Sciatic nerve (tissue), 2 donors: ENCODE measurements at regions of chr4 and their contacts with region 1.

Region 1: DNA sequence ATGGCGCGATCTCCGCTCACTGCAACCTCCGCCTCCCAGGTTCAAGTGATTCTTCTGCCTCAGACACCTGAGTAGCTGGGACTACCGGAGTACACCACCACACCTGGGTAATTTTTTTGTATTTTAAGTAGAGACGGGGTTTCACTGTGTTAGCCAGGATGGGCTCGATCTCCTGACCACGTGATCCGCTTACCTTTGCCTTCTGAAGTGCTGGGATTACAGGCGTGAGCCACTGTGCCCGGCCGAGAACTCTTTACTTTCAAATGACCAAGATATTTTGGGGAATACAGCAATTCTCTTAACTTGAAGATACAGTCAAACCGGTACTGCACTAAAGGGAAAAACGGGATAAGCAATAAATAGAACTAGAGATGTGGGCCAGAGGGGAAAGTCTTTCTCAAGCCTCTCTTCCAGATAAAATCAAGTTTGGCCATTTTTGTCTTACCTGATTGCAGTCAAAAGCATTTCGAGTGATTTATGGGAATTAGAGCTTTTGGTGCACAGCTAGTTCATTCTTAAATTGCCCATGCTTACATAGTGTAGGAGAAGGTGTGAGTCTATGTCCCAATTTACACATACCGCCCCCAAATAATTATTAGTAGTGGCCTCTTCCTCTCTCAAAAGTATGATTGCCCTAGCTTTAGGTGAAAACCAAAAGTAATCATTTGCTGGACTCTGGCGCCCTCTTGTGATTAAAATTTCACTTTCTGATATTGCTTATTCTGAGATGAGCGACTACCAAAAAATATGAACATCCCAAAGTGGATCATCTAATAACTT is 53.2 kb upstream of the ABCG2 start:
- DNase-seq: no peak
- ATAC-seq: peak; percentile 73

Region 2: GRCh38 chr4:87853108-87853507 is 358.6 kb before region 1 on chr4:
- intact Hi-C with region 1: loop called (anchors 10 kb)
- DNase-seq: no peak
- ATAC-seq: no peak

Region 3: GRCh38 chr4:88017516-88018297 is 194.0 kb before region 1 on chr4:
- intact Hi-C with region 1: no loop called
- DNase-seq: no peak
- ATAC-seq: peak; percentile 97

Region 4: DNA sequence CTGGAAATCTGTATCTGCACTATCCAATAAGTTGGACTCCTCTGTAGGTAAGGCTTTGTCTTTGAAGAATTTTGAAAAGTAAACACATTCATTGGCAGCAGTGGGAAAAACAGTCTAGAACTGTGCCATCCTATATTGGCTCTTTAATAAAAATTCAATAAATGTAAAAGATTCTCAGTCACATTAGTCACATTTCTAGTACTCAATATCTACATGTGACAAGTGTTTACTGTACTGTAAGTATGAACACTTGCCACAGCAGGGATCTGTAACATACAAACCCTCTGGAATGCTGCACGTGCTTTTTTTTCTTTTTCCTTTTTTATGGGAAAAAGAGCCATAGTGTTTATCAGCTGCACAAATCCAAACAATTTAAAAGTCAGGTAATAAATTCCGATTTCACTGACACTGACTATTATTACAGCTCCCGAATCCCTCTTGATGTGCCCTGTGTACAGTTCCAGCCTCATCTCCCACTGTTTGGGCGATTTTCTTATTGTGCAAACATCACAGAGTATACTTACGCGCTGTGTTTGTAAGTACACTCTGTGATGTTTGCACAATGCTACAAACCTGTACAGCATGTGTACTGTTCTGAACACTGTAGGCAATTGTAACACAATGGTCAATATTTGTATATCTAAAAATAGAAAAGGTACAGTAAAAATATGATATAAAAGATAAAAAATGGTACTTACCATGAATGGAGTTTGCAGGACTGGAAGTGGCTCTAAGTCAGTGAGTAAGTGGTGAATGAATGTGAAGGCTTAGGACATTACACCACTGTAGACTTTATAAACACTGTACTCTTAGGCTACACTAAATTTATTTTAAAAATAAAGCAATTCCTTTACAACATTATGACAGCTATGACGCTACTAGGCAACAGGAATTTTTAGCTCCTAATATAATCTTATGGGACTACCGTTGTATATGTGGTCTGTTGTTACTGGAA is 303.2 kb after region 1 on chr4:
- intact Hi-C with region 1: loop called (anchors 5 kb)
- DNase-seq: no peak
- ATAC-seq: no peak